Posterior cingulate gyrus (tissue), 11 donors: ENCODE measurements at regions of chr1 and their contacts with region 1.

Region 1: DNA sequence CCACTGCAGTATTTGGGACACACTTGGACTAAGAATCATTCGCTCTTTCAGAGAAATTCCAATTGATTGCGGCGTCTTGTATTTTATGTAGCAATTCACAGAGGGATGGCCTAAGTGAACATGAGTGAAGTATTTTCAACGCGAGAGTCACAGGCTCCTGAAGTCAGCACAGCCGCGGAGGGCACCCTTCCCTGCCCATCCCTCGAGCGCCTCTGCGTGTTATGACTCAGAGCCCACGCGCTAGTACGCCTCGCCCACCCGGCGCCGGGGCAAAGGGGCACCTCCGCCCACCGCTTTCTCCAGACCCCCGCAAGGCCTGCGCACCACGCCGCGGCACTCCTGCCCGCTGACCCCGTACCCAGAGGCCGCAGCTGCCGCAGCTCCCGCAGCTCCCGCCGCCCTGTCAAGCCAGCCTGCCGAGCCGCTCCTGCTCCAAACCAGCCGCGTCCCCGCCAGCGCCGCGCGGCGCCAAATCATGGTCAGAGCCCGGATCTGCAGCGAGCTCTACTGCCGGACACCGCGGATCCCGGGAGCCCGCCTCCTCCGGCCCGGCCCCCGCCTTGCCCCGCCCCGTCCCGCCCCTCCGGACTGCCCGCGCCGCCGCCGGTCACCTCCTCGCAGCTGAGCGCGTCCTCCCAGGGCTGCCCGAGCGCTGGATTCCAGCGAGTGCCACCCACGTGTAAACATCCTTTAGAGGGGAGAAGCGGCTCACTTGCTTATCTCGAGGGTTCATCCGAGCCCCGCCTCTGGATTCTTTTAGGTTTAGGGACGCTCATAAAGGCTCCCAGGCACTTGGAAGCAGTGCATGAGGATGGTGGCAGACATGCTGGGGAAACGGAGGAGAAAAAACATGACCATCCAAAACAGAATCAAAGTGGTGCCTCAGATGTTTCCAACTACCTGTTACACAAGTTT is at the start of gene GLRX2:
- DNase-seq: peak; percentile 75 to 98 (median 86)

Region 2: DNA sequence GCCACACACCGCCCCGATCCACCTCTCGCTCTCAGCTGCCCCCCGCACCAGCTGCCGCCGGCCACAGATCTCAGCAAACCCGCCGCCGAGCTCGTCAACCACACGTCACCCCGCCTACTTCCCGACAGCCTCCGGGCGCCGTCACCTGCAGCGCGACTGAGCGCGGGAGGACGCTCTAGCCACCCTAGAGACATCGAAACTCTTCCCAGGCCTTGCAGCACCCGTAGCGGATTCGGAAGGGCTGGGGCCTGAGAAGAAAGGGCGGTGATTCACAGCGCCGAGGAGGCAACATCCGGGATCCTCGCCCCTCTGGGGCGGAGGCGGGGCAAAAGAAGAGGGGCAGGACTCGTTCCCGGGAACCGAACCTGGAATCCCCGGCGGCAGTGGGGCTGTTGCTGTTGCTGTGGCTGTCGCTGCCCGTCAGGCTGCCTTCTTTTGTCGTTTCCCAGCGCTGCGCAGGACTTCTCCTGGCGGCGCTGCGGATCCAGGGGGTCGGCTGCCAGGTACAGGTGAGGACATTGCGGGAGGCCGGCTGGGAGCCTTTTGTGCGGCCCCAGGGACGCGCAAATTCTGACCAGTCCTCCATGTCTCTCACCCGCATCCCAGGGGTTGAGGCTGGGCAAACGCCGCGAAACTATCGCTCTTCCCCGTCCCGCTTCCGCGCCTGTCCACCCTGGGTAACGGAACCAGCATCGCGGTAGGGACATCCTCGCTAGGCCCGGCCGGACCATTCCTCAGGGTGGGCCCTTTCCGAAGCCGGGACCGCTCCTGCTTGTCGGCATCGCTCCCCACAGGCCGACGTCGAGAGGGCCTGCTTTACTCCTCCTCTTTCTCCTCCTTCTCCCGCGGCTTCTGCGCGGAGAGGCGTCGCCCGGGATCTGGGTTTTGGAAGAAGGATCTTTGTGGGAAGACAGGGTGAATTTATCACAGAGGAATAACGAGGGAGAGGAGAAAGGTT is 45.6 kb before region 1 on chr1 and contains the starts of genes RO60 and UCHL5:
- intact Hi-C with region 1: loop called (anchors 2 kb)
- DNase-seq: peak; percentile 94 to 100 (median 96)

Region 3: DNA sequence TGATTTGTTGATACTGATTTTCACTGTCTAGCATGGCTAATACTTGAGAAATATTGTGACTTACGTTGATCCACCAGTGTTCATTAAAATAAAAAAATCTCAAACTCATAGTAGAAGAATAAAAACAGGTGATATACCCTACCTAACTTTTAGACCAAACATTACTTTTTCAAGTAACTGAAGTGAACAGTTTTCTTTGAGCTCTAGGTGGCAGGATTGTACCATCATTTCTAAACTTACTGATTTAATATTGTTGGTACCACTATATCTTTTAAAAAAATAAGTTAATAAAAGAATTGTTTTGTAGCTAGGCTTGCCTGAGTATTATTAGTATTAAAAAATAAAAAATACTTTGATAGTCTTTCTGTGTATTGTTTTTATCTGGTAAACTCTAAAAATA is 38.1 kb after region 1 on chr1:
- intact Hi-C with region 1: no loop called
- DNase-seq: no peak

Region 4: GRCh38 chr1:193377472-193377871 is 272.3 kb after region 1 on chr1:
- intact Hi-C with region 1: no loop called
- DNase-seq: no peak